ENCODE measurements at regions of chr4 and their contacts with region 1.

Region 1: GRCh38 chr4:169293343-169294176 is 22.8 kb upstream of the SH3RF1 start:
- DNase-seq: no peak
- ATAC-seq: peak in 1 of 3 donors; percentile 50
- H3K4me3 ChIP-seq: no peak overlapping the region
- H3K4me3 Mint-ChIP-seq: no peak overlapping the region
- H3K27ac ChIP-seq: no peak overlapping the region
- H3K27ac Mint-ChIP-seq: no peak overlapping the region
- H3K4me1 ChIP-seq: peaks cover 12% of the 10 kb centered on the region
- H3K4me1 Mint-ChIP-seq: peaks cover 13 to 14% of the 10 kb centered on the region in 2 donors
- H3K27me3 ChIP-seq: no peaks in the 10 kb centered on the region
- H3K27me3 Mint-ChIP-seq: peaks cover 19 to 41% of the 10 kb centered on the region in 2 donors
- CTCF ChIP-seq: no peak

Region 2: DNA sequence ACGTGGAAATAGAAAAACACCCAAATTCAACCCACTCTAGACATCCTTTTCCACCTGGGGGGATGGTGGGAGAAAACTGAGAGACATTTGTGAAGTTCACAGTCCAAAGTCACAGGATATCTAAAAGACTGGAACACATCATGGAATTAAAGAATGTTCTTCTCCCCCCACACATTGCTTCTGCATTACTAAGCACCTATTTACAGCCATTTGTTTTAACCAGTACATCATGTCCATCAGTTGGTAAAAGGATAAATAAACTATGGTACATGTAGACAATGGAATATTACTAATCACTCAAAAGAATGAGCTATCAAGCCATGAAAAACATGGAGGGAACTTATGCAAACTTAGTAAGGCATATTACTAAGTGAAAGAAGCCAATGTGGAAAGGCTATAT is 1386.7 kb before region 1 on chr4:
- intact Hi-C with region 1: no loop called
- DNase-seq: no peak
- ATAC-seq: no peak
- H3K4me3 ChIP-seq: no peak overlapping the region
- H3K4me3 Mint-ChIP-seq: no peak overlapping the region
- H3K27ac ChIP-seq: no peak overlapping the region
- H3K27ac Mint-ChIP-seq: no peak overlapping the region
- H3K4me1 ChIP-seq: no peaks in the 10 kb centered on the region
- H3K4me1 Mint-ChIP-seq: no peaks in the 10 kb centered on the region
- H3K27me3 ChIP-seq: no peaks in the 10 kb centered on the region
- H3K27me3 Mint-ChIP-seq: no peaks in the 10 kb centered on the region
- CTCF ChIP-seq: no peak

Region 3: GRCh38 chr4:168945291-168945690 is 348.3 kb before region 1 on chr4:
- intact Hi-C with region 1: no loop called
- DNase-seq: no peak
- ATAC-seq: no peak
- H3K4me3 ChIP-seq: no peak overlapping the region
- H3K4me3 Mint-ChIP-seq: no peak overlapping the region
- H3K27ac ChIP-seq: no peak overlapping the region
- H3K27ac Mint-ChIP-seq: no peak overlapping the region
- H3K4me1 ChIP-seq: no peaks in the 10 kb centered on the region
- H3K4me1 Mint-ChIP-seq: no peaks in the 10 kb centered on the region
- H3K27me3 ChIP-seq: no peaks in the 10 kb centered on the region
- H3K27me3 Mint-ChIP-seq: peaks cover 0 to 3% of the 10 kb centered on the region in 2 donors
- CTCF ChIP-seq: no peak

Region 4: DNA sequence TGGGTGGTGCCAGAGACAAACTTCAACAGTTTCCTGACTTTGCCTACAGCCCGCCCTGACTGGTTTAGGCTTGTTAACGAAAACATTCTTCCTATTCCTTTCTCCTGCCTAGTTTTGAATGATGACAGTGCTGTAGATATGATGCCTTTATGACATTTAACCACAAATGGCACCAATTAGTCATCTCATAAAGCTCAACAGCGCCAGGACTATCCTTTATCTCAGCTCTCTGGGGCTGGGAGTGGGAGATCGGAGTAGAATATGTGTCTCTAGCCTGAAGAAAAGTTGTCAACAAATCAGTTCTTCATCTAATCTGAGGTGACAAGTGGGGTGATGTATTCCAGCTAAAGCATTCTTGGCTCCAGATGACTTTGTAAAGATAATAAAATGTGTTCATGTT is 41.8 kb after region 1 on chr4:
- intact Hi-C with region 1: loop called (anchors 2 kb)
- DNase-seq: no peak
- ATAC-seq: no peak
- H3K4me3 ChIP-seq: no peak overlapping the region
- H3K4me3 Mint-ChIP-seq: no peak overlapping the region
- H3K27ac ChIP-seq: no peak overlapping the region
- H3K27ac Mint-ChIP-seq: no peak overlapping the region
- H3K4me1 ChIP-seq: no peaks in the 10 kb centered on the region
- H3K4me1 Mint-ChIP-seq: no peaks in the 10 kb centered on the region
- H3K27me3 ChIP-seq: no peaks in the 10 kb centered on the region
- H3K27me3 Mint-ChIP-seq: peaks cover 4 to 5% of the 10 kb centered on the region in 2 donors
- CTCF ChIP-seq: no peak

Region 5: GRCh38 chr4:169659716-169660670 is 366.4 kb after region 1 on chr4:
- intact Hi-C with region 1: no loop called
- DNase-seq: peak; percentile 35 to 88
- ATAC-seq: peak; percentile 94 to 98 (median 96)
- H3K4me3 ChIP-seq: peak overlapping the region; percentile 31
- H3K4me3 Mint-ChIP-seq: peak overlapping the region; percentile 85
- H3K27ac ChIP-seq: peak overlapping the region; percentile 78
- H3K27ac Mint-ChIP-seq: peak overlapping the region; percentile 93
- H3K4me1 ChIP-seq: peaks cover 4% of the 10 kb centered on the region
- H3K4me1 Mint-ChIP-seq: peaks cover 12 to 27% of the 10 kb centered on the region in 2 donors
- H3K27me3 ChIP-seq: no peaks in the 10 kb centered on the region
- H3K27me3 Mint-ChIP-seq: no peaks in the 10 kb centered on the region
- CTCF ChIP-seq: no peak

Measured in natural killer cell (primary cell).